ENCODE measurements at regions of chr7 and their contacts with region 1.

Region 1: DNA sequence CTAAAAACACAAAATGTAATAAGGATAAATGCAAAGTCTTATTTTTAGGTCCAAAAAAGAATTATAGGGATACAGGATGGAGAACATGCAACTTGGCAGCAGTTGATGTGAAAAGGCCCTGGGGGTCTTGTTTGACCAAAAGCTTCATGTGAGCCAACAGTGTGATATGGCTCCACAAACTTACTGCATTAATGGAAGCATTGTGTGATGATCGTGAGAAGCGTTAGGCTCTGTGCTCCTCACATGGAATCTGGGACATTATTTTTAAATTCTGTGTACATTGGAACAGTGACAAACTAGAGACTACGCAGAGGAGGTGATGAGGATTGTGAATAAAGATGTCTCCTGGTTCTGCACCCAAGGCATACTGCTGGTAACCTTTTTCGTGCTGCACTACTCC is 39.1 kb upstream of the CALD1 start:
- DNase-seq: no peak
- ATAC-seq: no peak
- H3K4me3 ChIP-seq: no peak overlapping the region
- H3K4me3 Mint-ChIP-seq: no peak overlapping the region
- H3K27ac ChIP-seq: no peak overlapping the region
- H3K27ac Mint-ChIP-seq: no peak overlapping the region
- H3K4me1 ChIP-seq: no peaks in the 10 kb centered on the region
- H3K4me1 Mint-ChIP-seq: peaks cover 0 to 15% (median 0%) of the 10 kb centered on the region in 7 donors
- H3K27me3 ChIP-seq: no peaks in the 10 kb centered on the region
- H3K27me3 Mint-ChIP-seq: peaks cover 0 to 7% (median 0%) of the 10 kb centered on the region in 5 donors

Region 2: GRCh38 chr7:134774119-134774518 is 33.7 kb after region 1 on chr7:
- CTCF ChIA-PET with region 1: no interaction called
- POLR2A ChIA-PET with region 1: no interaction called
- intact Hi-C with region 1: loop called in 1 of 2 experiments (anchors 1 kb)
- DNase-seq: no peak
- ATAC-seq: no peak
- H3K4me3 ChIP-seq: no peak overlapping the region
- H3K4me3 Mint-ChIP-seq: no peak overlapping the region
- H3K27ac ChIP-seq: no peak overlapping the region
- H3K27ac Mint-ChIP-seq: no peak overlapping the region
- H3K4me1 ChIP-seq: no peaks in the 10 kb centered on the region
- H3K4me1 Mint-ChIP-seq: no peaks in the 10 kb centered on the region
- H3K27me3 ChIP-seq: no peaks in the 10 kb centered on the region
- H3K27me3 Mint-ChIP-seq: no peaks in the 10 kb centered on the region

Measured in naive thymus-derived CD4-positive, alpha-beta T cell (primary cell).